Motor neuron (in vitro differentiated cells): ENCODE measurements at regions of chr9 and their contacts with region 1.

Region 1: GRCh38 chr9:22119537-22120158 is 110.5 kb upstream of the CDKN2B start:
- ATAC-seq: peak in 3 of 8 experiments; percentile 22 to 70 (median 48)
- H3K4me3 ChIP-seq: no peak overlapping the region
- H3K27ac ChIP-seq: no peak overlapping the region
- H3K4me1 ChIP-seq: peaks cover 10 to 15% of the 10 kb centered on the region in 2 donors

Region 2: DNA sequence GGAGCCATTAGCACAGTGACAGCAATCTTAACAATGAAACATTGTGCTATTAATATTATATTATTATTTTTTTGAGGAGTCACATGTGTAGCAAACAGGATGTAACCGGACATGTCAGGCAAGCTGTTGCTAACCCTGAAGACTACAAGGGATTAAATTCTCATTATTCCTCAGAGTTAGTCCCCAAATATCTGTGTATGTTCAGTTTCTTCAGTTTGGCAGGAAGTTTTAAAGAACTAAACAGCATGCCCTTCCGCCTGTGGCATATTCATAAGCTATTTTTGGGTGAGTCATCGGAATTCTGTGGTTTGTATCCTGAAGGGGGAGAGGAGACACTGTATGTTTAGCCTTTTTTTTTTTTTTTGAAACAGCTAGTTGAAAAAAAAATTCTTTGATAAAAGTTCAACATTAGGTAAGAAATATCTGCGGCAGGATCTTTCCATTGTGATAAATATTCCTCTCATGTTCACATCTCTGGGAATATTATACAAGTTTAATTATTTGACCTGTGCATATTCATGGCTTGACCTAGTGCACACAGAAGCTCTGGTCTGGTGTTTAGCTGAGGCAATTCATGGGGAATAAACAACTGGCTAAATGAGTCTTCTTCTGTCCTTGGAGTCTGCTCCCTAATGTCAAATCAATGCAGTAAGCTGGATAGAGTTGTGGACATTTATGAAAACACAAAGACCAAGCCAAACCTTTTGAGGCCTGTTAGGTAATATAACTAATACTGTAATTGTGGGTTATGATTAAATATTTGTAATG is 92.1 kb after region 1 on chr9:
- in situ Hi-C with region 1: loop called in 1 of 9 experiments (anchors 25 kb)
- ATAC-seq: peak in 3 of 8 experiments; percentile 85 to 92 (median 90)
- H3K4me3 ChIP-seq: no peak overlapping the region
- H3K27ac ChIP-seq: no peak overlapping the region
- H3K4me1 ChIP-seq: no peaks in the 10 kb centered on the region

Region 3: GRCh38 chr9:22332202-22332601 is 212.6 kb after region 1 on chr9:
- in situ Hi-C with region 1: no loop called
- ATAC-seq: peak in 5 of 8 experiments; percentile 20 to 65 (median 41)
- H3K4me3 ChIP-seq: no peak overlapping the region
- H3K27ac ChIP-seq: peak overlapping the region in 1 of 2 donors; percentile 55
- H3K4me1 ChIP-seq: peaks cover 3 to 7% of the 10 kb centered on the region in 2 donors